Heart left ventricle (tissue), 16 donors: ENCODE measurements at regions of chr2 and their contacts with region 1.

Region 1: DNA sequence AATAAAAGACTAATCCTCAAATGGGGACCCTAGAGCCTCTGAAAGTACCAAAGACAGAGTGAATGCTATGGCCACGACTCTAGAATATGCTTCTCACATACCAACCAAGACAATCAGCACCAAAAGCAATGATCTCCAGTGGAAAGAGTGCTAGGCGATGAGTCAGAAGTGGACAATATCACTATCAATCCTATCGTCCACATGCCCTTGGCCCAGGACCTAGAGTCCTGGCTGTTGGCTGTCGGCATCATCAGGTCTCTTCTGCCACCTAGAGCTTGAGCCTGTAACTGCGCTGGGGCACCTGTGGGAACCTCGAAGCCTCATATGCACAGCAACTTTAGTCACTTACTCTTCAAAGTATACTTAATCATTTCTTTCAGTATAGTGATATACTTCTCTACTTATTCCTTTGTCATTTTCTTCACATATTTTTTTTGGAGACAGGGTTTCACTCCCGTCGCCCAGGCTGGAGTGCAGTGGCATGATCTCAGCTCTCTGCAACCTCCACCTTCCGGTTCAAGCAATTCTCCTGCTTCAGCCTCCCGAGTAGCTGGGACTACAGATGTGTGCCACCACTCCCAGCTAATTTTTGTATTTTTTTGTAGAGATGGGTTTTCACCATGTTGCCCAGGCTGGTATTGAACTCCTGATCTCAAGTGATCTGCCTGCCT is 29.7 kb downstream of the NOL10 start:
- DNase-seq: peak in 4 of 5 donors; percentile 28 to 68 (median 50)
- ATAC-seq: peak in 3 of 4 donors; percentile 86 to 93 (median 92)
- H3K4me3 ChIP-seq: no peak overlapping the region
- H3K27ac ChIP-seq: no peak overlapping the region
- H3K4me1 ChIP-seq: peaks cover 0 to 4% (median 0%) of the 10 kb centered on the region in 12 donors
- H3K27me3 ChIP-seq: no peaks in the 10 kb centered on the region
- CTCF ChIP-seq: peak; percentile 62 to 78 (median 73)
- POLR2A ChIP-seq: no peak

Region 2: DNA sequence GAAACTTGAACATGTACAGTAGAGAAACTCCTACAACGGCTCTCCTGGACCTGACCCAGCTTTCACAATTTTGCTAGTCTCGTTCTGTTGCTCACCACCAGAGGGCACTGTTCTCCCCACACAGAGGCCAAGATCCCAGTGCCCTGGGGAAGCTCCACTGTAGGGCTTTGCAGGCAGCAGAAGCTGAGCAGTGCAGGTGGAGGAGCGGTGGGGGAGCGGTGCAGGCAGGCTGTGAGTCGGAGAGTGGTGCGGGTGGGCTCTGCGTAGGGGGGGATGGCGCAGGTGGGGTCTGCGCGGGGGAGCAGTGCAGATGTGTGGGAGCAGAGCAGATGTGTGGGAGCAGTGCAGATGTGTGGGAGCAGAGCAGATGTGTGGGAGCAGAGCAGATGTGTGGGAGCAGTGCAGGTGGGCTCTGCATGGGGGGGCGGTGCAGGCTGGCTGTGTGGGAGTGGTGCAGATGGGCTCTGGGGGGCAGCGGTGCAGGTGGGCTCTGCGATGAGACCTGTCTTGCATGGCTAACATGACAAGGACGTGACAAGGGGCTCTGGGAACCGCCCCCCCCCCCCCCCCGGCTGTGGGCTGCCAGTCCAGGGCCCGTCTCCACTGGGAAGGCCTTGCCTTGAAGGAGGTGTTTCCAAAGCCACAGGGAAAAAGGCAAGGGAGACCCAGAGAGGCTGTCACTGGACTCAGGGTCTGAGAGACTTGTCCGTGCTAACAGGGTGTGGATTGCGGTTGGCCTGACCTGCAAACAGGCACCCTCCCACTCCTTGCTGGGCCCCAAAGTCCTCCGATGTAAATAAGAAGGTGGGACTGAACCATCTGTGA is 587.2 kb before region 1 on chr2:
- intact Hi-C with region 1: loop called in 2 of 10 experiments (anchors 5 to 10 kb)
- DNase-seq: peak in 4 of 5 donors; percentile 79 to 88 (median 82)
- ATAC-seq: peak; percentile 76 to 94 (median 92)
- H3K4me3 ChIP-seq: no peak overlapping the region
- H3K27ac ChIP-seq: no peak overlapping the region
- H3K4me1 ChIP-seq: peaks cover 0 to 8% (median 0%) of the 10 kb centered on the region in 12 donors
- H3K27me3 ChIP-seq: peaks cover 0 to 24% (median 0%) of the 10 kb centered on the region in 9 donors
- CTCF ChIP-seq: peak; percentile 78 to 88 (median 83)
- POLR2A ChIP-seq: no peak

Region 3: DNA sequence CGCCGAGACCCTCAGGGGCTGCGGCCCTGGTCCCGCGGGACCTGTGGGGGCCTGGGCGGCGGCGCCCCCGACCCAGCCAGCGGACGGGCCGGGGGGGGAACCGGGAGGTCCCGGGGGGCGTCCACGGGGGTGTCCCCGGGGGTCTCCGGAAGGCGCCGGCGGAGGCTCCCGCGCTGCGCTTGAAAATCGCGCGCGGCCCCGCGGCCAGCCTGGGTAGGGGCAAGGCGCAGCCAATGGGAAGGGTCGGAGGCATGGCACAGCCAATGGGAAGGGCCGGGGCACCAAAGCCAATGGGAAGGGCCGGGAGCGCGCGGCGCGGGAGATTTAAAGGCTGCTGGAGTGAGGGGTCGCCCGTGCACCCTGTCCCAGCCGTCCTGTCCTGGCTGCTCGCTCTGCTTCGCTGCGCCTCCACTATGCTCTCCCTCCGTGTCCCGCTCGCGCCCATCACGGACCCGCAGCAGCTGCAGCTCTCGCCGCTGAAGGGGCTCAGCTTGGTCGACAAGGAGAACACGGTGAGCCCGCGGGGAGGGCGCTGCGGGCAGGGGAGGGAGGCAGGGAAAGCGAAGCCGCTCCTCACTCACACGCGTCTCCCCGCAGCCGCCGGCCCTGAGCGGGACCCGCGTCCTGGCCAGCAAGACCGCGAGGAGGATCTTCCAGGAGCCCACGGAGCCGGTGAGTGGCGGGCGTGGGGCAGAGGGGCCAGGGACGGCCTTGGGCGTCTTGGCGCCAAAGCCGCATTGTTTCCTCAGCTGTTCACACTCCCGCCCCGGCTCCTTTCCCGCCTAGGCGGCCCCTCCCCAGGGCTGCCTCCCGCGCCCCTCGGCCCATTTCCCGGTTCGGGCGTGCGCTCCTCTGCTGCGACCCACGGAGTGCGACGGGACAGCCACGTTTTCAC is 537.4 kb before region 1 on chr2 and contains the start of gene RRM2:
- intact Hi-C with region 1: loop called in 8 of 10 experiments (anchors 5 to 10 kb)
- DNase-seq: peak; percentile 92 to 96 (median 94)
- ATAC-seq: peak; percentile 90 to 94 (median 93)
- H3K4me3 ChIP-seq: peak within 1 kb of the TSS; percentile 35 to 79 (median 54)
- H3K27ac ChIP-seq: no peak within 1 kb of the TSS
- H3K4me1 ChIP-seq: peaks cover 10 to 66% (median 21%) of the 10 kb centered on the region in 12 donors
- H3K27me3 ChIP-seq: peaks cover 8 to 24% (median 12%) of the 10 kb centered on the region in 9 donors
- CTCF ChIP-seq: peak in 2 of 12 donors; percentile 8 to 11
- POLR2A ChIP-seq: no peak
- total RNA-seq, gene RRM2: 0.09 to 32.6 (median 1.3) TPM in 8 of 9 donors, not detected in the other

Region 4: GRCh38 chr2:10135296-10136089 is 524.5 kb before region 1 on chr2:
- intact Hi-C with region 1: loop called in 2 of 10 experiments (anchors 5 to 10 kb)
- DNase-seq: no peak
- ATAC-seq: peak in 2 of 4 donors; percentile 34 to 67
- H3K4me3 ChIP-seq: no peak overlapping the region
- H3K27ac ChIP-seq: no peak overlapping the region
- H3K4me1 ChIP-seq: no peaks in the 10 kb centered on the region
- H3K27me3 ChIP-seq: no peaks in the 10 kb centered on the region
- CTCF ChIP-seq: no peak
- POLR2A ChIP-seq: no peak

Region 5: DNA sequence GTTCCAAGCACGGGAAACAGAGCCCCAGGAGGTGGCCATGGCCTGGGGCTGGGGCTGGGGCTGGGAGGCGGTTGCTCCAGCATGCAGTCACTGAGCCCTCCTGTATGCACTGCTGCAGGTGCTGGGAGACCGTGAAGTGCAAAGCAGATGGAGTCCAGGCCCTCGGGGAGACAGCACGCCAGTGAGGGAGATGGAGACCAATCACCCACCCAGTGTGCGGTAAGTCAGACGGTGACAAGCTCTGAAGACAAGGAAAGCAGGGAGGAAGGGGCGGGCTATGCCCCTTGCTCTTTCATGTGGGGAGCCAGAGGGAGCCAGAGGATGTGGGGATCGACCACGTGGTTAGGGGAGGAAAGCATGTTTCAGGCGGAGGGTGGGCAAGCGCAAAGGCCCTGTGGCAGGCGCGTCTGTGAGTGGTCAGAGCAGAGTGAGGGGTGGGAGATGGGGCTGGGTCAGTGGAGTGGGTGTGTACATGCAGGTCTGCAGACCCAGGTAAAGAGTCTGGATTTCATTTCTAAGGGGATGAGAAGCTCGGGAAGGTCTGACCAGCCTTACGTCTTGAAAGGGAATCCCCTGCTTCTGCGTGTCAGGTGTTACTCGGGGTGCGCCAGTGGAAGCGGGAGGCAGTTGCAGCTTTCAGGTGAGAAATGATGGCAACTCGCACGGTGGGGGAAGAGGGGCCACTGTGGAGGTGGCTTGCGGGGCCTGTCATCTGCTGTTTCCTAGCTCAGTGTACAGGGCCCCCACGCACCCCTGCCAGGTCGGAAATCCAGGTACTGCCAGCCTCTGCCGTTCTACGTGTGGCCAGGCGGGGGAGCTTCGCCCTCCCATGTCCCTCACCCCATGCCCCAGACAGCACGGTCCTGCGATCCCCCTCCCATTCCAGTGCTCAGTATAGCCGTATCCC is 518.0 kb before region 1 on chr2:
- intact Hi-C with region 1: loop called in 2 of 10 experiments (anchors 5 to 10 kb)
- DNase-seq: no peak
- ATAC-seq: peak in 3 of 4 donors; percentile 36 to 48 (median 47)
- H3K4me3 ChIP-seq: no peak overlapping the region
- H3K27ac ChIP-seq: no peak overlapping the region
- H3K4me1 ChIP-seq: peaks cover 0 to 15% (median 9%) of the 10 kb centered on the region in 12 donors
- H3K27me3 ChIP-seq: no peaks in the 10 kb centered on the region
- CTCF ChIP-seq: peak; percentile 24 to 65 (median 48)
- POLR2A ChIP-seq: no peak

Region 6: DNA sequence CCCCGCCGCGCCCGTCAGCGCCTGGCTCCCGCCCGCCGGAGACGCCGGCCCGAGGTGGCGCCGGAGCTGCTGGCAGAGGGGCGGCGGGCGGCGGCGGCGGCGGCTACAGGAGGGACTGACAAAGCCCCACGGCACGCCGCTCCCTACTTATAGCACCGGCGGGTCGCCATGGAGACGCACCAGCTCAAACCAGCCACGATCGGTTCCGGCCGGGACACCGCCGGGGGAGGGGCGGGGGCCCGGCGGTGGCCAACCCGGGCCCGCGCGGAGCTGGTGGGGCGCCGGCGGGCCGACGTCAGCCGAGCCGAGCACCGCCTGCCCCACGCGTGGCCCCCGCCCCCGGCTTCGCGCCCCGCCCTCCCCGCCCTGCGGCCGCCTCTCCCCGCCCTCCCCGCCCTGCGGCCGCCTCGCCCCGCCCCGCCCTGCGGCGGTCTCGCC is 211.8 kb before region 1 on chr2 and contains the start of gene ODC1:
- intact Hi-C with region 1: loop called in 6 of 10 experiments (anchors 5 to 10 kb)
- DNase-seq: peak; percentile 93 to 96 (median 95)
- ATAC-seq: peak; percentile 84 to 93 (median 90)
- H3K4me3 ChIP-seq: peak within 1 kb of the TSS; percentile 55 to 86 (median 73)
- H3K27ac ChIP-seq: peak within 1 kb of the TSS; percentile 84 to 96 (median 90)
- H3K4me1 ChIP-seq: peaks cover 0 to 49% (median 27%) of the 10 kb centered on the region in 12 donors
- H3K27me3 ChIP-seq: no peaks in the 10 kb centered on the region
- CTCF ChIP-seq: no peak
- POLR2A ChIP-seq: no peak
- total RNA-seq, gene ODC1: 28.6 to 77.6 (median 48.2) TPM

Region 7: GRCh38 chr2:10457911-10458604 is 202.0 kb before region 1 on chr2:
- intact Hi-C with region 1: loop called in 2 of 10 experiments (anchors 5 kb)
- DNase-seq: no peak
- ATAC-seq: peak in 1 of 4 donors; percentile 21
- H3K4me3 ChIP-seq: no peak overlapping the region
- H3K27ac ChIP-seq: no peak overlapping the region
- H3K4me1 ChIP-seq: peaks cover 0 to 15% (median 5%) of the 10 kb centered on the region in 12 donors
- H3K27me3 ChIP-seq: no peaks in the 10 kb centered on the region
- CTCF ChIP-seq: no peak
- POLR2A ChIP-seq: no peak

Region 8: GRCh38 chr2:10832203-10832936 is 172.3 kb after region 1 on chr2:
- intact Hi-C with region 1: no loop called
- DNase-seq: peak; percentile 73 to 89 (median 79)
- ATAC-seq: peak; percentile 69 to 85 (median 84)
- H3K4me3 ChIP-seq: no peak overlapping the region
- H3K27ac ChIP-seq: no peak overlapping the region
- H3K4me1 ChIP-seq: peaks cover 0 to 14% (median 1%) of the 10 kb centered on the region in 12 donors
- H3K27me3 ChIP-seq: peaks cover 6 to 47% (median 13%) of the 10 kb centered on the region in 9 donors
- CTCF ChIP-seq: peak; percentile 92 to 99 (median 96)
- POLR2A ChIP-seq: no peak